BJ (cell line): ENCODE measurements at regions of chr17 and their contacts with region 1.

Region 1: DNA sequence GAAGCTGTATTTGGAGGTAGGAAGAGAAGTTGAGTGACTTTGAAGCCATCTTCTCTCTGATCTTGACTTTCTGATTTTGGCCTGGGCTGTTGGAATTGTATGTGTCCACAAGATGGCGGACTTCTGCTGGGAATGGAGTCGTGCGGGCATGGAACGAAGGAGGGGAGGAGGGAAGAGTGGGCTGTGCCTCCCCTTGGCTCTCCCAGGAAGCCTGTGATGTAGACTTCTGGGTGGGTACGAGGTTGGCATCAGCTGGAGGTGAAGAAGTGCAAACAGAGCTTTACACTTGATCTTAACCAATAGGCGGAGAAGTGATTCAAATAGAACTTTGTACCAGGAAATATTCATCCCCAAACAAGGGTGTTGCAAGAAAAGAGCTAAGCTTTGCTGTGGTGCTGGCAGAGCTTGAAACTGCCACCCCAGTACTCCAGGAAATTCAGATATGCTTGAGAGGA is 7.4 kb upstream of the TMEM220 start:
- DNase-seq: no peak
- H3K4me3 ChIP-seq: no peak overlapping the region
- H3K27me3 ChIP-seq: no peaks in the 10 kb centered on the region
- CTCF ChIP-seq: peak; percentile 86

Region 2: GRCh38 chr17:10327640-10328039 is 409.6 kb before region 1 on chr17:
- CTCF ChIA-PET with region 1: no interaction called
- POLR2A ChIA-PET with region 1: no interaction called
- DNase-seq: peak; percentile 18
- H3K4me3 ChIP-seq: no peak overlapping the region
- H3K27me3 ChIP-seq: no peaks in the 10 kb centered on the region
- CTCF ChIP-seq: peak; percentile 90

Region 3: DNA sequence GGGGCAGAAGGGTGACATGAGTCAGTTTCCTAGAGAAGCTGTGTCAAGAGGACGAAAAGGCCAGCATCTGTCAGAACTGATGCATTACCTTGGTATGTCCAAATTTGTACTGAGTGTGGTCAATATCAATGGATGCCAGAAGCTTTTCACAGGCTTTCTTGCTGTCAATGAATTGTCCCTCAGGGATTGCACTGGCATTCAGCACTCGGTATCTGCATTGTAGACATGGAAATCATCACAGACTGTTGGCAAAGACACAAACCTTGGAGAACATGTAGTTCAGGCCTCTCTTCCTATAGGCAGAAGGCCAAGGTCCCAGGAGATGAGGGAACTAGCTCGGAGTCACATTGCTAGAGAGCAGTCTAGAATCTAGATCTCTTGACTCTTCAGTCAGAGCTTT is 96.7 kb before region 1 on chr17:
- CTCF ChIA-PET with region 1: interaction called, 44 read pairs
- POLR2A ChIA-PET with region 1: no interaction called
- DNase-seq: no peak
- H3K4me3 ChIP-seq: no peak overlapping the region
- H3K27me3 ChIP-seq: no peaks in the 10 kb centered on the region
- CTCF ChIP-seq: no peak

Region 4: DNA sequence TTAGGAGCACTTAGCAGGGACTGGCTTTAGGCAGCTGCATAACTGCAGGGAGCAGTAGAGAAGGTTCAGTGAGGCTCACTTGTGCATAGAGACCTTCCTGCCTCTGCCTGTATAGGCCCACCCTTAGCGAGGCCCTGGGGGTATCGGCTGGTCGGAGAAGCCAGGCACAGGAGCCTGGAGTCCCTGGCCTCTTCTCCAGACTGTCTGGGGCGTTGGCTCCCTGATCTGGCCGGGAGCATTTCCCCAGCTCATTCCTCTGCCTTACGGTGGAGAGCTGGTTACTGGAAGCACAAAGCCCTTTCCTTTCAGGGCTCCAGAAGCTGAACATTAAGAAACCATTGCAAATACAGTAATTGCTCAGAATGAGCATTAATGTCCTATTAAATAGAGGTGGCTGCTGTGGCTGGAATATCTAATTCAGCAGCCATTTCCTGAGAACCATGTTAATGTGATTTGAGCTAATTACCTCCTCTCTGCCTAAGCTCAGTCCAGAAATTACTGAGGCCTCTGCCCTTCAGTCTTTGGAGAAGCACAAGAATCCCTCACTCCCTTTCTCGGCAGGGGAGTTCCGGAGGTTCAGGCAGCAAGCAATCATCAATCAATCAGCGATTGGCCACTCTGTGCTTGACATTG is 11.5 kb after region 1 on chr17:
- CTCF ChIA-PET with region 1: interaction called, 20 read pairs
- POLR2A ChIA-PET with region 1: interaction called, 3 read pairs
- DNase-seq: no peak
- H3K4me3 ChIP-seq: no peak overlapping the region
- H3K27me3 ChIP-seq: peaks cover 4% of the 10 kb centered on the region
- CTCF ChIP-seq: no peak

Region 5: DNA sequence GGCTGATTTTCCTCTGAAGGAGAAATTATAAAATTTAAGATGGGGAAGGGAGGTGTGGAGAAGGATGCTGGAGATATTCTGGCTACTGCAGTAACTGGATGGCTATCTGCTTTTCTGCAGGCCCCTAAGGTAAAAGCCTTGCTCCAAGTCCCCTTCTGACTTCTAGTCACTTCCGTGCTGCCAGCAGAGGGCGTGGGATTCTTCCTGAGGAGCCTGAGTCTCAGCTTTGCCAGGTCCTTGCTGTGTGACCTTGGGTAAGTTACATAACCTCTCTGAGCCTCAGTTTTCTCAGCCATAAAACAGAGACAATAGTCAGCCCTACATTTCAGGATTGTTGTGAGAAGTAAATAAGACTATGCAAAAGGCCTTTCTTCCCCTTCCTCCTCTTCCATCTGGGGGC is 16.9 kb after region 1 on chr17:
- CTCF ChIA-PET with region 1: interaction called, 20 read pairs
- POLR2A ChIA-PET with region 1: no interaction called
- DNase-seq: no peak
- H3K4me3 ChIP-seq: no peak overlapping the region
- H3K27me3 ChIP-seq: no peaks in the 10 kb centered on the region
- CTCF ChIP-seq: peak; percentile 44

Region 6: DNA sequence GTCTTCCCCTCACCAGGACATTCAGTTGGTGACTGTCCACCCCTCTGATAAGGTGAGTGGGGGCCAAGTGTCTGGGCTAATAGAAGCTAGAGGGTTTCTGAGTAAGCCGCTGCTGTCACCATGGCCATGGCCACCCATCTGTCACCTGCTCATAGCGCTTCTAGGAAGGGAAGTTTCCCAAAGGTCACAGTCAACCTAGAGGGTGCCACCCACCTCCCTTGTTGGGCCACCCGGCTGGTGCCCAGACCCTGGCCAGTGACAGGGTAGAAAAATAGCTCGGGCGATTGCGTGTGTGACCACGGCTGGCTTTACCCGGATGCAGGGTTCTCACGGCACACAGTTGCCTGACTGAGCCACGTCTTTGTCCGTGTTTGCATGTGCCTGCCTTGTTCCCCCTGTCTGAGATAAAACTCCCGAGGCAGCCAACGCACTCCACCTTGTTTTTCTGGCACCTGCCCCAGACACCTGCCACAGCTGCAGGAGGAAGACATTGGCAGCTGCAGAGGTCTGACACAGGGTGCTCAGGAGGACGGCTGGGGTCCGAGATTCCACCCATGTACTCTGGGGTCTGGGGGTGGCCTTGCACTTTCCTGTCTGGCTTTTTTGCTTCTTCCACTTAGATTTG is 99.9 kb after region 1 on chr17:
- CTCF ChIA-PET with region 1: interaction called, 11 read pairs
- POLR2A ChIA-PET with region 1: no interaction called
- DNase-seq: no peak
- H3K4me3 ChIP-seq: no peak overlapping the region
- H3K27me3 ChIP-seq: no peaks in the 10 kb centered on the region
- CTCF ChIP-seq: no peak

Region 7: GRCh38 chr17:10844621-10845387 is 107.6 kb after region 1 on chr17:
- CTCF ChIA-PET with region 1: interaction called, 71 read pairs
- POLR2A ChIA-PET with region 1: no interaction called
- DNase-seq: no peak
- H3K4me3 ChIP-seq: peak overlapping the region; percentile 45
- H3K27me3 ChIP-seq: no peaks in the 10 kb centered on the region
- CTCF ChIP-seq: peak; percentile 89